ENCODE measurements at regions of chr16 and their contacts with region 1.

Region 1: GRCh38 chr16:22206013-22206841 is at the start of gene EEF2K:
- DNase-seq: peak; percentile 98
- ATAC-seq: peak; percentile 95 to 96
- H3K4me3 ChIP-seq: peak within 1 kb of the TSS; percentile 84
- H3K27ac ChIP-seq: peak within 1 kb of the TSS; percentile 90 to 94
- H3K4me1 ChIP-seq: peaks cover 12% of the 10 kb centered on the region
- CTCF ChIP-seq: peak; percentile 87
- EP300 ChIP-seq: no peak
- POLR2A ChIP-seq: peak; percentile 49
- RAD21 ChIP-seq: peak; percentile 70 to 90
- polyA plus RNA-seq, gene EEF2K: 8.2 and 11.6 TPM in 2 replicates

Region 2: GRCh38 chr16:22141746-22142145 is 64.5 kb before region 1 on chr16:
- CTCF ChIA-PET with region 1: no interaction called
- POLR2A ChIA-PET with region 1: no interaction called
- DNase-seq: peak; percentile 54 to 55
- ATAC-seq: peak; percentile 81 to 92
- H3K4me3 ChIP-seq: no peak overlapping the region
- H3K27ac ChIP-seq: no peak overlapping the region
- H3K4me1 ChIP-seq: no peaks in the 10 kb centered on the region
- CTCF ChIP-seq: peak; percentile 35; the same call in 2 of the 3 replicates
- EP300 ChIP-seq: no peak
- POLR2A ChIP-seq: no peak
- RAD21 ChIP-seq: 0 out of 5 replicates have a peak, but pooled peaks of 1 of the 2 experiments have one; percentile 11

Region 3: GRCh38 chr16:22225060-22225459 is 18.8 kb after region 1 on chr16:
- CTCF ChIA-PET with region 1: interaction called, 14 read pairs
- POLR2A ChIA-PET with region 1: no interaction called
- DNase-seq: no peak
- ATAC-seq: no peak
- H3K4me3 ChIP-seq: no peak overlapping the region
- H3K27ac ChIP-seq: no peak overlapping the region
- H3K4me1 ChIP-seq: peaks cover 11% of the 10 kb centered on the region; the same call in 2 of the 3 replicates
- CTCF ChIP-seq: no peak
- EP300 ChIP-seq: no peak
- POLR2A ChIP-seq: no peak
- RAD21 ChIP-seq: no peak

Region 4: DNA sequence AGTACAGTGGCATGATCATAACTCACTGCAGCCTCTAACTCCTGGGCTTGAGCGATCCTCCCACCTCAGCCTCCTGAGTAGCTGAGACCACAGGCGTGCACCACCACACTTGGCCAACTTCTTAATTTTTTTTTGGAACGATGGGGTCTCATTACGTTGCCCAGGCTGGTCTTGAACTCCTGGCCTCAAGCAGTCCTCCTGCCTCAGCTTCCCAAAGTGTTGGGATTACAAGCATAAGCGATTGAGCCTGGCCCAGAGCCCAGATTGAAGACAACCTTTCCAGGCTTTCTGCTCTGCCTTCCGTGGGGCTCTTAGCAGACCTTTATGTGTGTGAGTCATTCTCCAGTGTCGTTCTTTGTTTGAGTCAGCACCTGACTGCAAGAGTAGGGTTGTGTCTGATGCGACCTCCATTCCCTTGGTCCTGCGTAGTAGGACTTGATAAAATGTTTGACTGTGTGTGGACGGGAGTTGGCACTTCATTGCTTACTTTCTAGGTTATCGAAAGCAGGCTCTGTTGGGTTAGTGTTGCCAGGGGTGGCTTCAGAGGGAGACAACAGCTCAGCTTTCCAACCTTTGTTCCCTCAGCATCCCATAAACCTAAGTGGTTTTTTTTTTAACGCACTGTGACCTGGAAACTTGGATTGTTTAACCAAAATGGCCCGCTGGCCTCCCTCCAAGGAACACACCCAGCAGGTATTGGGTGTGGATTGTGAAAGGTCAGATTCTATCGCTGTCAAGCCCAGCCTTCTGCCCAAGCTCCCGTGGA is 26.2 kb after region 1 on chr16:
- CTCF ChIA-PET with region 1: interaction called, 5 read pairs
- POLR2A ChIA-PET with region 1: interaction called, 16 read pairs
- DNase-seq: peak; percentile 87 to 95
- ATAC-seq: peak; percentile 95
- H3K4me3 ChIP-seq: peak overlapping the region; percentile 16; the same call in 1 of the 3 replicates
- H3K27ac ChIP-seq: peak overlapping the region; percentile 64 to 82
- H3K4me1 ChIP-seq: peaks cover 34% of the 10 kb centered on the region
- CTCF ChIP-seq: no peak
- EP300 ChIP-seq: peak in 1 of 2 experiments; percentile 31; a peak in 1 of 5 replicates
- POLR2A ChIP-seq: no peak
- RAD21 ChIP-seq: 0 out of 5 replicates have a peak, but pooled peaks of 1 of the 2 experiments have one; percentile 7